ENCODE measurements at regions of chr6 and their contacts with region 1.

Region 1: GRCh38 chr6:93419304-93420162 is at the start of gene EPHA7:
- DNase-seq: peak; percentile 93
- H3K4me3 ChIP-seq: peak within 1 kb of the TSS; percentile 37 to 69 (median 57)
- H3K27ac ChIP-seq: no peak within 1 kb of the TSS
- H3K4me1 ChIP-seq: peaks cover 35% of the 10 kb centered on the region
- H3K27me3 ChIP-seq: peaks cover 27 to 73% of the 10 kb centered on the region in 2 experiments
- CTCF ChIP-seq: no peak
- POLR2A ChIP-seq: no peak
- total RNA-seq, gene EPHA7: 0.09 TPM in 1 of 2 replicates, not detected in the other

Region 2: GRCh38 chr6:92577077-92577719 is 842.3 kb before region 1 on chr6:
- CTCF ChIA-PET with region 1: no interaction called
- POLR2A ChIA-PET with region 1: no interaction called
- dilution Hi-C with region 1: no loop called
- intact Hi-C with region 1: no loop called
- DNase-seq: peak; percentile 13
- H3K4me3 ChIP-seq: no peak overlapping the region
- H3K27ac ChIP-seq: no peak overlapping the region
- H3K4me1 ChIP-seq: no peaks in the 10 kb centered on the region
- H3K27me3 ChIP-seq: no peaks in the 10 kb centered on the region
- CTCF ChIP-seq: no peak
- POLR2A ChIP-seq: no peak

Region 3: GRCh38 chr6:92979281-92979680 is 440.3 kb before region 1 on chr6:
- CTCF ChIA-PET with region 1: interaction called, 3 read pairs
- POLR2A ChIA-PET with region 1: no interaction called
- dilution Hi-C with region 1: no loop called
- intact Hi-C with region 1: loop called (anchors 5 kb)
- DNase-seq: peak; percentile 10
- H3K4me3 ChIP-seq: no peak overlapping the region
- H3K27ac ChIP-seq: no peak overlapping the region
- H3K4me1 ChIP-seq: peaks cover 11% of the 10 kb centered on the region
- H3K27me3 ChIP-seq: no peaks in the 10 kb centered on the region
- CTCF ChIP-seq: no peak
- POLR2A ChIP-seq: no peak

Region 4: DNA sequence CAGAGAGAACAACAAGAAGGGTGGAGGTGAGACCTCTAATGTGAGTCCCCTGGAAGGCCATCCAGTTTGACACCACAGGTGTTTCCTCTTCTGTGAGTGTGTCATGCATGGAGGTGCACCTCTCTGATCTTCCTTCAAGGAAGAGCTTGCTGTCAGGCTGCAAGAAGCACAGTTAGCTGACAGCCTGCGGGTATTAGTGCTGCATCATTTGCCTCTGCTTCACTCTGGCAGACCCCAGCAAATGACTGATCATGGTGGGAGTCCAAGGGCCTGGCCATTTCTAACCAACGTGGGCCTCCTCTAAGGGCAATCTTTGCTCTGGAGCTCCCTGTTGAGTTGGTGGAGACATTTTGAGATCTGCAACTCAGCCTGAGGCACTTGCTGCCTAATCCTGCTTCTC is 206.5 kb before region 1 on chr6:
- CTCF ChIA-PET with region 1: no interaction called
- POLR2A ChIA-PET with region 1: no interaction called
- dilution Hi-C with region 1: no loop called
- intact Hi-C with region 1: no loop called
- DNase-seq: no peak
- H3K4me3 ChIP-seq: no peak overlapping the region
- H3K27ac ChIP-seq: no peak overlapping the region
- H3K4me1 ChIP-seq: no peaks in the 10 kb centered on the region
- H3K27me3 ChIP-seq: no peaks in the 10 kb centered on the region
- CTCF ChIP-seq: no peak
- POLR2A ChIP-seq: no peak

Region 5: DNA sequence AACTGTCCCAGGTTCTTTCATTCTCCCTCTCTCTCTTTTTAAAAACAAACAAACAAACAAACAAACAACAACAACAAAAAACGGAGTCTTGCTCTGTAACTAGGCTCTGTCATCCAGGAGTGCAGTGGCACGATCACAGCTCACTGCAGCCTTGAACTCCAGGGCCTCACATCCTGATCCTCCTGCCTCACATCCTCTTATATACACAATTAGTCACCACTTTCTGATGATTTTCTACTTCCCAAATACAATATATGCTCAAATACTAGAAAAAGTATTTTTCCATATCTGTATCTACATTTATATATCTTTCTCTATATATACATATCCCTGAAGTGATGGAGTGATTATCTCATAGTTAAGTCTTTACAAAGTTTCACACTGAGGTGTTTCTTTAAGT is 170.9 kb before region 1 on chr6:
- CTCF ChIA-PET with region 1: no interaction called
- POLR2A ChIA-PET with region 1: no interaction called
- dilution Hi-C with region 1: no loop called
- intact Hi-C with region 1: loop called (anchors 5 kb)
- DNase-seq: peak; percentile 63
- H3K4me3 ChIP-seq: no peak overlapping the region
- H3K27ac ChIP-seq: no peak overlapping the region
- H3K4me1 ChIP-seq: peaks cover 16% of the 10 kb centered on the region
- H3K27me3 ChIP-seq: no peaks in the 10 kb centered on the region
- CTCF ChIP-seq: no peak
- POLR2A ChIP-seq: no peak

Region 6: DNA sequence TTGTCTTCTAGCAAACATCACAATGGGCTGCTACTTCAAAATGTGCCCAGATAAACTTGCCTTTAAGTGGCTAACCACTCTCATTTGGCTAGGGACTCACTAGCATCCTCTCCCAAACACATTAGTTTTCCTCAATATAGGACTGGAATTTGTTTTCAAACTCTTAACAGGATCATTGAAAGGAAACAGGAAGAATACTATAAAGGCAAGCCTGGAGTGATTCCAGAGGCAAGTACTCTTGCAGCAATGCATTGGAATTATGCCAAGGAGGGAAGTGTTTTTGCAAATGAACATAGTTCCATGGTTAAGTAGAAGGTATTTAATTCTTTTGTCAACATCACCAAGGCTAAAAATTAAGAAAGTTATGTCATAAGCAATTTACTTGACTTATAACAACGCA is 12.3 kb before region 1 on chr6:
- CTCF ChIA-PET with region 1: interaction called, 20 read pairs
- POLR2A ChIA-PET with region 1: no interaction called
- dilution Hi-C with region 1: no loop called
- intact Hi-C with region 1: loop called (anchors 1 kb)
- DNase-seq: peak; percentile 80
- H3K4me3 ChIP-seq: no peak overlapping the region
- H3K27ac ChIP-seq: no peak overlapping the region
- H3K4me1 ChIP-seq: peaks cover 7% of the 10 kb centered on the region
- H3K27me3 ChIP-seq: peaks cover 6 to 17% of the 10 kb centered on the region in 2 experiments
- CTCF ChIP-seq: no peak
- POLR2A ChIP-seq: no peak

Region 7: GRCh38 chr6:94254689-94255088 is 835.2 kb after region 1 on chr6:
- CTCF ChIA-PET with region 1: no interaction called
- POLR2A ChIA-PET with region 1: no interaction called
- dilution Hi-C with region 1: no loop called
- intact Hi-C with region 1: loop called (anchors 1 kb)
- DNase-seq: no peak
- H3K4me3 ChIP-seq: no peak overlapping the region
- H3K27ac ChIP-seq: no peak overlapping the region
- H3K4me1 ChIP-seq: no peaks in the 10 kb centered on the region
- H3K27me3 ChIP-seq: no peaks in the 10 kb centered on the region
- CTCF ChIP-seq: no peak
- POLR2A ChIP-seq: no peak

Measured in endothelial cell of umbilical vein (primary cell).